PC-9 (cell line): ENCODE measurements at regions of chr22 and their contacts with region 1.

Region 1: DNA sequence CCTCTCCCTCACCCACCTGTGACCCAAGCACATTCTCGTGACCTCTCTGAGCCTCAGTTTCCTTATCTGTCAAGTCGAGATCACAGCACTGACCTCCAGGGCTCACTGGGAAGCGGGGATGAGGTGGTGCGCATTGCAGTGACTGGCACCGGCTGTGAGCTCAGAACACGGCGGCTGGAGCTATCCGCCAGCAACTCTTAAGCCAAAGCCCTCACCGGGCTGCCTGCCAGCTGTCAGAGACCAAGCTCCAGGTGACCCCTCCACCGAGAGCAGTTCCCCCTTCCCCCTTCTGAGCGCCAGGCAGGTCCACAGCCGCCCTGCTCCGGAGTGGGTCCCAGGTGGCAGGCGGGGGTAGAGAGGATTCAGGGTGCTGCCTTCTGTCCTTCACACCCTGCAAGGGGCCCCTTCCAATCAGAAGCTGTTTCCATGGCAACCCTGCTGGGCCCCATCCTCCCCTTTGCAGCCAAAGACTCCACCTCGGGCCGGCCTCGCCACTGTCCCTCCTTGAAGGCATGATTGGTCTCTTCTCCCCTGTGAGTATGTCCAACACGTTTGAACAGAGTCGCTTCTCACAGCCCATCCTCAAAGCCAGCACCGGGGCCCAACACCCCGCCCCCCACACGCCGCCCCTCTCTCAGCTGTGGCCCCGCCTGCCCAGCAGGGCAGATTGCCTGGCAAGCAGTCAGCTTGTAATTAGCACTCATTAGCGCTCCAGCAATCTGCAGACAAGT is 98.7 kb downstream of the WNT7B start:
- DNase-seq: no peak
- H3K4me3 ChIP-seq: no peak overlapping the region
- H3K27ac ChIP-seq: no peak overlapping the region
- H3K4me1 ChIP-seq: no peaks in the 10 kb centered on the region
- H3K27me3 ChIP-seq: no peaks in the 10 kb centered on the region
- CTCF ChIP-seq: no peak

Region 2: GRCh38 chr22:45651931-45652528 is 226.2 kb before region 1 on chr22:
- CTCF ChIA-PET with region 1: interaction called, 10 read pairs
- POLR2A ChIA-PET with region 1: no interaction called
- intact Hi-C with region 1: no loop called
- DNase-seq: no peak
- H3K4me3 ChIP-seq: no peak overlapping the region
- H3K27ac ChIP-seq: no peak overlapping the region
- H3K4me1 ChIP-seq: no peaks in the 10 kb centered on the region
- H3K27me3 ChIP-seq: no peaks in the 10 kb centered on the region
- CTCF ChIP-seq: no peak